Activated CD8-positive, alpha-beta memory T cell treated with anti-CD3 and anti-CD28 coated beads, Interleukin-2, amount 10 ng/mL, durations not matched to agents 7 days and 5 days (primary cell): ENCODE measurements at regions of chr21 and their contacts with region 1.

Region 1: GRCh38 chr21:36203617-36203917 is 46.9 kb downstream of the DOP1B start:
- DNase-seq: peak; percentile 73
- ATAC-seq: peak; percentile 95
- H3K4me3 Mint-ChIP-seq: no peak overlapping the region
- H3K27ac Mint-ChIP-seq: peak overlapping the region; percentile 15
- H3K4me1 Mint-ChIP-seq: peaks cover 32% of the 10 kb centered on the region
- H3K27me3 Mint-ChIP-seq: no peaks in the 10 kb centered on the region

Region 2: DNA sequence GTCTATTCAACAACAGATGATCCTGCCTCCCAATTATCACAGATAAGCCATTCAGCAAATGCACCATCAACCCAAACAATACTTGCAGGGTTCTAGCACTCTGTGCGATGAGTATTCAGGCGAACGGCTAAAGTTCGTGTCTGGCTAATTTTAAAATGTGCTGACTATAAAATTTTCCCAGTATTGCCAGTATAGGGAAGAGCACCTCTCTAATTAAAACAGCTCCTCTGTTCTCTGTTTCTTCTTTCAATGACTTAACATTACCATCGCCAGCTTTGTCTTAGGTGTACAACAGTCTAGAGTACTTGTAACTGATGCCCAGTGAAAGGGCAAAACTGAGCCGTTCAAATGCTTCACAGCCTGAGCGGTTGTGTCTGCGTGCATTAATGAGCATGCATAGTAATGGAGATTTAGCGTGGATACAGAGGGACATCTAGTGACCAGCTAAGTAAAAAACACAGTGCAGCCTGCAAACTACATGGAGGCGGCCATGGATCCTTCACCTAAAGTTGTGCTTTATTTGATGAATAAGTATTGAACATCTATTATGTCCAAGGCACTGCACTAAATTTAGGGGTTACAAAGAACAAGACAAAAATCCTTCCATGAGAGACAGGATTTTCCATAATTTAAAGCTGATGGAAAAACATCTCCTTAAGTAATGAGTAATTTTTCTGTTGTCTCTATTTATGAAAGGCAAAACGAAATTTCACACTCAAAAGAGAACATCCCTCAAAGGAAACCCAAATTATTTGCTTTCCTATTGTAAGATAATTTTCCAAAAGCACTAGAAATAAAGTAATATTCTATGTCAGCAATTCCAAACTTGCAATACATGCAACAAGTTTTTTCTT is 263.3 kb before region 1 on chr21:
- CTCF ChIA-PET with region 1: no interaction called
- DNase-seq: no peak
- ATAC-seq: no peak
- H3K4me3 Mint-ChIP-seq: no peak overlapping the region
- H3K27ac Mint-ChIP-seq: no peak overlapping the region
- H3K4me1 Mint-ChIP-seq: no peaks in the 10 kb centered on the region
- H3K27me3 Mint-ChIP-seq: peaks cover 27% of the 10 kb centered on the region

Region 3: GRCh38 chr21:36156339-36156814 is 47.2 kb before region 1 on chr21:
- CTCF ChIA-PET with region 1: interaction called, 14 read pairs
- DNase-seq: peak; percentile 100
- ATAC-seq: peak; percentile 90
- H3K4me3 Mint-ChIP-seq: peak overlapping the region; percentile 78
- H3K27ac Mint-ChIP-seq: no peak overlapping the region
- H3K4me1 Mint-ChIP-seq: peaks cover 25% of the 10 kb centered on the region
- H3K27me3 Mint-ChIP-seq: no peaks in the 10 kb centered on the region

Region 4: GRCh38 chr21:36169436-36170128 is 34.0 kb before region 1 on chr21:
- CTCF ChIA-PET with region 1: interaction called, 21 read pairs
- DNase-seq: no peak
- ATAC-seq: no peak
- H3K4me3 Mint-ChIP-seq: no peak overlapping the region
- H3K27ac Mint-ChIP-seq: no peak overlapping the region
- H3K4me1 Mint-ChIP-seq: peaks cover 12% of the 10 kb centered on the region
- H3K27me3 Mint-ChIP-seq: no peaks in the 10 kb centered on the region

Region 5: DNA sequence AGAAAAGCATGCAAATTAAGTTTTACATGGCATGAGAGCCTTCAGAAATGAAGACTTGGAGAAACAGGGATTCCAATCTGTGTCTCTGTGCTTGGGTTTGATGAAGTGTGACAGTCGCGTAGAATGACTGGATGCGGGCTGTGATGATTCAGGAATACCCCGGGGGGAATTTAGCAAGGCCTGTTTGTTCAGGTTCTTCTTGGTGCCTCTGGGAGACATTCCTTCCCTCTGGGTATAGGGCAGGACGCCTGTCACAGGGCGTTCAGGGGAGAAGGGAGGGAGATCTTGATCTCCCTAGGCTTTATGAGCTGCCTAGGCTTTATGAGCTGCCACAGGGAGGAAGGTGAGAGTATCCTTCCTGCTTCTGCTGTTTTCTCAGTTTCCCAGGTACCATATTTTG is 10.4 kb before region 1 on chr21:
- CTCF ChIA-PET with region 1: no interaction called
- DNase-seq: no peak
- ATAC-seq: no peak
- H3K4me3 Mint-ChIP-seq: no peak overlapping the region
- H3K27ac Mint-ChIP-seq: no peak overlapping the region
- H3K4me1 Mint-ChIP-seq: peaks cover 2% of the 10 kb centered on the region
- H3K27me3 Mint-ChIP-seq: no peaks in the 10 kb centered on the region

Region 6: GRCh38 chr21:36297921-36298594 is 94.5 kb after region 1 on chr21:
- CTCF ChIA-PET with region 1: no interaction called
- DNase-seq: peak; percentile 90
- ATAC-seq: peak; percentile 100
- H3K4me3 Mint-ChIP-seq: peak overlapping the region; percentile 75
- H3K27ac Mint-ChIP-seq: peak overlapping the region; percentile 96
- H3K4me1 Mint-ChIP-seq: peaks cover 37% of the 10 kb centered on the region
- H3K27me3 Mint-ChIP-seq: no peaks in the 10 kb centered on the region